Heart right ventricle (tissue), 16 donors: ENCODE measurements at regions of chr2 and their contacts with region 1.

Region 1: DNA sequence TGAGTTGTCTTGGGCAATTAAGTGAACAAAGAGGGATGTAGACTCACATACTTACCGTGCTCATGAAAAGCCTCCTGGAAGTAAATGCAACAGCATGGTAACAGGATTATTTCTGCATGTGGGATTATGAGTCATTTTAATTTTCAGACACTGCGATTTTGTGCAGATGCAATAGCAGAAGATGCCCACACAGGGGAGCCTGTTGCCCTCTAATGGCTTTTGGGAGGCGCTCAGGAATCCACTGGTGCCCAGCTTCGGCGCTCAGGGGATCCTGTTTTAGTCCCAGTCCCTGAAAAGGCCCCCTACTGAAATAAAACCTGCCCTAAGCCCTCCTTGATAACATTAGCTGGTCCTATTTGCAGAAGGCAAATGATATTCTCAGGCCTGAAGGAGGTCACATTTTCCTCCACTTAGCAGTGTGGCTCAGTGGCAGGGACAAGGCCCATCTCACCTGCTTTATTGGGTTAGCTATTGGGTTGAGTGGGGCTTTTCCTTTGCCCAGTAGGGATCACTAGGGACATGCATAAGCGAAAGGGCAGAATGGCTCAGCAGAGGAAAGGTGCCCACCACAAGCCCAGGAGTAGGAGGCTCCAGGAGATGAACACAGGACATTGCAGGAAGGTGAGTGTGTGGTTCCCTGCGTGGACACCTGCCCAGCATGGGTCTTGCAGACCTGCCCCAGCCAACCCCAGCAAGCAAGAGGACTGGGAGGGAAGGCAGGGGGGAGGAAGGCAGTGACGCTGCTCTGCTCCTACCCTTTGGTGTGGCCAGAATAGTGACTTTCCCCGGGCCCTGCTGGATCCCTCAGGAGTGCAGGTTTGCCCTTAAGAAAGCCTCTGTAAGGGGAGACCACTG is 26.5 kb upstream of the KCNS3 start:
- DNase-seq: peak; percentile 31 to 52
- ATAC-seq: peak; percentile 34 to 80 (median 60)
- H3K4me3 ChIP-seq: no peak overlapping the region
- H3K27ac ChIP-seq: no peak overlapping the region
- H3K4me1 ChIP-seq: no peaks in the 10 kb centered on the region
- H3K27me3 ChIP-seq: peaks cover 0 to 4% (median 0%) of the 10 kb centered on the region in 7 donors
- CTCF ChIP-seq: peak; percentile 73 to 93 (median 85)

Region 2: GRCh38 chr2:17892770-17893534 is 41.0 kb after region 1 on chr2:
- intact Hi-C with region 1: no loop called
- DNase-seq: no peak
- ATAC-seq: no peak
- H3K4me3 ChIP-seq: no peak overlapping the region
- H3K27ac ChIP-seq: no peak overlapping the region
- H3K4me1 ChIP-seq: no peaks in the 10 kb centered on the region
- H3K27me3 ChIP-seq: peaks cover 0 to 4% (median 0%) of the 10 kb centered on the region in 7 donors
- CTCF ChIP-seq: no peak

Region 3: GRCh38 chr2:17912266-17912691 is 60.3 kb after region 1 on chr2:
- intact Hi-C with region 1: loop called in 1 of 10 experiments (anchors 10 kb)
- DNase-seq: peak in 1 of 2 donors; percentile 9
- ATAC-seq: peak in 6 of 8 donors; percentile 23 to 76 (median 58)
- H3K4me3 ChIP-seq: peak overlapping the region in 1 of 10 donors; percentile 6
- H3K27ac ChIP-seq: peak overlapping the region in 1 of 10 donors; percentile 10
- H3K4me1 ChIP-seq: peaks cover 0 to 22% (median 5%) of the 10 kb centered on the region in 9 donors
- H3K27me3 ChIP-seq: peaks cover 0 to 4% (median 0%) of the 10 kb centered on the region in 7 donors
- CTCF ChIP-seq: no peak

Region 4: DNA sequence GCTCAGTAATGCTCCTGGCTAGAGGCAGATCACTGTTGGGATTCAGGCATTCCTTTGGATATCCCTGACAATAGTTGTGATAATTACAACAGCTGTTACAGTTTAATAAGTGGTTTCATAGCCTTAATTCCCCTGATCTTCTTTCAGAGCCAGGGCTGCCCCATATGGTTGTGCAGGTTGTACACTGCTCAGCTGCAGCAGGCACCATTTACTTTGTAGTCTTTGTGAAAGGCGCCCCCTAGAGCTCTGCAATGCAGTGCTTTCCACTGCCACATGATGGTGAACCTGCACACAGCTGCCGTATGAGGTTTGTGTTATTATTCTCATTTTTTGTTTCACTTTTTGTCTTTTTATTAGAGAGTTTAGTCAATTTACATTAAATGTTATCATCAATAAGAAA is 265.6 kb after region 1 on chr2:
- intact Hi-C with region 1: loop called in 1 of 10 experiments (anchors 10 kb)
- DNase-seq: peak in 1 of 2 donors; percentile 10
- ATAC-seq: no peak
- H3K4me3 ChIP-seq: no peak overlapping the region
- H3K27ac ChIP-seq: no peak overlapping the region
- H3K4me1 ChIP-seq: no peaks in the 10 kb centered on the region
- H3K27me3 ChIP-seq: no peaks in the 10 kb centered on the region
- CTCF ChIP-seq: peak in 7 of 9 donors; percentile 20 to 50 (median 39)

Region 5: DNA sequence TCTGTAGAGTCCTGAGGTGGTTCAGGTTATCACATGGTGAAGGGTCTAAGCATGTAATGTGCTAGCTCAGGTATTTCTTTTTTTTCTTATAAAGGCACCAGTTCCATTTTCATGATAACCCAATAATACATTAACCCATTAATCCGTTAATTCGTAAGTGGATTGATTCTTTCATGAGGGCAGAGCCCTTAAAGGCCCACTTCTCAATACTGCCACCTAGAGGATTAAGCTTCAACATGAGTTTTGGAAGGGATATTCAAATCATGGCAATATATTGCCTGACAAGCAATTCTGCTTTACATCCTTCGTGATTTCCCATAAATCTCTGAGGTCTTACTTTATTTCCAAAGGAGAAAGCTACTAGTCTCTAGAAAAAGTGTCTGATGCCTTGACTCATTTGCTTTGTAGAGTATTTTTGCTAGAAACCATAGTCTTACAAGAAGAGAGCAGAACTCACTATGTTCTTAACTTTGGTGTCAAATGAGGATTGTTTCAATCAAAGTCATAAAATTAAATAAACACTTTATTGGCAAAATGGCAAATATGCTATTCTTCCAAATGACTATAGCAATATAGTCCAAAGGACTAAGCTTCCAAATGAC is 297.8 kb after region 1 on chr2:
- intact Hi-C with region 1: loop called in 6 of 10 experiments (anchors 1 to 5 kb)
- DNase-seq: no peak
- ATAC-seq: peak in 1 of 8 donors; percentile 35
- H3K4me3 ChIP-seq: no peak overlapping the region
- H3K27ac ChIP-seq: no peak overlapping the region
- H3K4me1 ChIP-seq: no peaks in the 10 kb centered on the region
- H3K27me3 ChIP-seq: peaks cover 0 to 6% (median 0%) of the 10 kb centered on the region in 7 donors
- CTCF ChIP-seq: peak; percentile 37 to 79 (median 74)

Region 6: GRCh38 chr2:18178736-18179349 is 326.9 kb after region 1 on chr2:
- intact Hi-C with region 1: loop called in 6 of 10 experiments (anchors 1 to 10 kb)
- DNase-seq: peak in 1 of 2 donors; percentile 9
- ATAC-seq: peak in 2 of 8 donors; percentile 60 to 71
- H3K4me3 ChIP-seq: no peak overlapping the region
- H3K27ac ChIP-seq: no peak overlapping the region
- H3K4me1 ChIP-seq: peaks cover 0 to 4% (median 0%) of the 10 kb centered on the region in 9 donors
- H3K27me3 ChIP-seq: no peaks in the 10 kb centered on the region
- CTCF ChIP-seq: peak; percentile 47 to 83 (median 77)

Region 7: GRCh38 chr2:18369760-18370159 is 517.8 kb after region 1 on chr2:
- intact Hi-C with region 1: loop called in 1 of 10 experiments (anchors 5 kb)
- DNase-seq: no peak
- ATAC-seq: no peak
- H3K4me3 ChIP-seq: no peak overlapping the region
- H3K27ac ChIP-seq: no peak overlapping the region
- H3K4me1 ChIP-seq: peaks cover 0 to 3% (median 0%) of the 10 kb centered on the region in 9 donors
- H3K27me3 ChIP-seq: peaks cover 0 to 4% (median 0%) of the 10 kb centered on the region in 7 donors
- CTCF ChIP-seq: no peak

Region 8: GRCh38 chr2:18378020-18378653 is 526.2 kb after region 1 on chr2:
- intact Hi-C with region 1: loop called (anchors 1 to 5 kb)
- DNase-seq: peak in 1 of 2 donors; percentile 9
- ATAC-seq: peak in 3 of 8 donors; percentile 42 to 66 (median 42)
- H3K4me3 ChIP-seq: no peak overlapping the region
- H3K27ac ChIP-seq: no peak overlapping the region
- H3K4me1 ChIP-seq: peaks cover 0 to 3% (median 0%) of the 10 kb centered on the region in 9 donors
- H3K27me3 ChIP-seq: peaks cover 0 to 26% (median 10%) of the 10 kb centered on the region in 7 donors
- CTCF ChIP-seq: peak; percentile 54 to 88 (median 79)